Activated CD4-positive, alpha-beta memory T cell treated with anti-CD3 and anti-CD28 coated beads for 36 hours (primary cell): ENCODE measurements at regions of chr6 and their contacts with region 1.

Region 1: DNA sequence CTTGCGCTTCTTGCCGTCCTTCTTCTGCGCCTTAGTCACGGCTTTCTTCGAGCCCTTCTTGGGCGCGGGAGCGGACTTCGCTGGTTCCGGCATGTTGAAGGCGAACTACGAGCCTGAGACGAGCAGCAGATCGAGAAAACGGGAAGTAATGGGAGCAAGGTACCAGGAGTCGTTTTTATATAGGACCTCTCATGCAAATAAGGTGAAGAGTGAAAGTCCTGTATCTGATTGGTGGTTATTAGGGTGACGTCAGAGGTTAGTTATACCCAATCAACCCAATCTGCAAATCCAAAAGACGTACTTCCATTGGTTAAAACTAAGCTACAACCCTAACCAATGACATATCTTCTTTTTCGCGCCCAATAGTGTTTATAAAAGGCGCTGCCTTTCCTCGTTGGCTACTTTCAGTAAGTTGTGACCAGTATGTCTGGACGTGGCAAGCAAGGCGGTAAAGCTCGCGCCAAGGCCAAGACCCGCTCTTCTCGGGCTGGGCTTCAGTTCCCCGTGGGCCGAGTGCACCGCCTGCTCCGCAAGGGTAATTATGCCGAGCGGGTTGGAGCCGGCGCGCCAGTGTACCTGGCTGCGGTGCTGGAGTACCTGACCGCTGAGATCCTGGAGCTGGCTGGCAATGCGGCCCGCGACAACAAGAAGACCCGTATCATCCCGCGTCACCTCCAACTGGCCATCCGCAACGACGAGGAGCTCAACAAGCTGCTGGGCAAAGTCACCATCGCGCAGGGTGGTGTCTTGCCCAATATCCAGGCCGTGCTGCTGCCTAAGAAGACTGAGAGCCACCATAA is 100.6 kb upstream of the PRSS16 start:
- DNase-seq: peak; percentile 89
- H3K4me3 Mint-ChIP-seq: no peak overlapping the region
- H3K27ac Mint-ChIP-seq: no peak overlapping the region
- H3K4me1 Mint-ChIP-seq: peaks cover 21% of the 10 kb centered on the region
- H3K27me3 Mint-ChIP-seq: no peaks in the 10 kb centered on the region

Region 2: GRCh38 chr6:26196846-26197648 is 949.9 kb before region 1 on chr6:
- CTCF ChIA-PET with region 1: no interaction called
- POLR2A ChIA-PET with region 1: interaction called, 11 read pairs
- intact Hi-C with region 1: no loop called
- DNase-seq: peak; percentile 84
- H3K4me3 Mint-ChIP-seq: peak overlapping the region; percentile 86
- H3K27ac Mint-ChIP-seq: peak overlapping the region; percentile 99
- H3K4me1 Mint-ChIP-seq: peaks cover 31% of the 10 kb centered on the region
- H3K27me3 Mint-ChIP-seq: peaks cover 3% of the 10 kb centered on the region

Region 3: GRCh38 chr6:27126815-27127537 is 19.9 kb before region 1 on chr6:
- CTCF ChIA-PET with region 1: interaction called, 14 read pairs
- POLR2A ChIA-PET with region 1: interaction called, 375 read pairs
- intact Hi-C with region 1: no loop called
- DNase-seq: peak; percentile 88
- H3K4me3 Mint-ChIP-seq: peak overlapping the region; percentile 71
- H3K27ac Mint-ChIP-seq: peak overlapping the region; percentile 65
- H3K4me1 Mint-ChIP-seq: peaks cover 19% of the 10 kb centered on the region
- H3K27me3 Mint-ChIP-seq: no peaks in the 10 kb centered on the region

Region 4: DNA sequence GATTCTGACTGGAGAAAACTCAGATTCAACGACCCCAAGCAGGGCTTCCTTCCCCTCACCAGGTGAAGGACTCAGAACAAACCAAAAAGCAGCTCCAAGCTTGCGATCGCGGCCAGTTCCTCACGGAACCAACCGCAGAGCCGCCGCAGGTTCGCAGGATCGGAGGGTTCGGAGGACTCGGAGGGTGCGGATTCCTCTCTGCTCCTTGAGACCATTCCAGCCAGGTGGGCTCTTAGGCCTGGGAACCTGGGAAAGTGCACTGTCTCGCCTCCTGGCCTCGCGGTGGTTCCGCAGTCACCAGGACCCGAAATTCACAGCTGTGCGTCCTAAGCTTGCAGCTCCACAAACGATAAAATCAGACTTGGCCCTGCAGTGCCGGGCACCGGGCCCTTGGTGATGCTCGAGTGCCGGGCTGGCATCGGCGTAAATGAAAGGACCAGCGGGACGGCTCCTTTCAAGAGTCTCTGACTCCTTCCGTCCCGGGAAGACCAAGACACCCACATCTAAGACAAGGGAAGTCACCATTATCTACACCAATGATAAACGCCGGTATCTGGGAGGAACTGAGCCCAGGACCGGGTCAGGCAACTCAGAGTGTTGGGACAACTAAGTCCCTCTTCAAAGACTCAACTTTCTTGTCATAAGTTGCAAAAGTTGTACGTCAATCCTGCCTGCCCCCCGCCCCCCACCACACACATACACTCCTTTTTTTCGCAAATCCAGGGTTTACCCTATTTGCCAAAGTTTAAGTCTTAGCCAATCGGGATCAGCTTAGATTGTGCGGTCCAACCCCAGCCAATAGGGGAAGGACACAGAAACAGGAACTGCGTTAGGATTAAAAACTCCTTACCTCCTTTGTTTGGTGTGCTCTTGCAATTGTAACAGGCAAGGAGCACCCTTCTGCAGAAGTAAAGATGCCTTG is 30.8 kb after region 1 on chr6:
- CTCF ChIA-PET with region 1: no interaction called
- POLR2A ChIA-PET with region 1: interaction called, 10 read pairs
- intact Hi-C with region 1: no loop called
- DNase-seq: peak; percentile 84
- H3K4me3 Mint-ChIP-seq: peak overlapping the region; percentile 88
- H3K27ac Mint-ChIP-seq: peak overlapping the region; percentile 88
- H3K4me1 Mint-ChIP-seq: peaks cover 10% of the 10 kb centered on the region
- H3K27me3 Mint-ChIP-seq: peaks cover 1% of the 10 kb centered on the region

Region 5: DNA sequence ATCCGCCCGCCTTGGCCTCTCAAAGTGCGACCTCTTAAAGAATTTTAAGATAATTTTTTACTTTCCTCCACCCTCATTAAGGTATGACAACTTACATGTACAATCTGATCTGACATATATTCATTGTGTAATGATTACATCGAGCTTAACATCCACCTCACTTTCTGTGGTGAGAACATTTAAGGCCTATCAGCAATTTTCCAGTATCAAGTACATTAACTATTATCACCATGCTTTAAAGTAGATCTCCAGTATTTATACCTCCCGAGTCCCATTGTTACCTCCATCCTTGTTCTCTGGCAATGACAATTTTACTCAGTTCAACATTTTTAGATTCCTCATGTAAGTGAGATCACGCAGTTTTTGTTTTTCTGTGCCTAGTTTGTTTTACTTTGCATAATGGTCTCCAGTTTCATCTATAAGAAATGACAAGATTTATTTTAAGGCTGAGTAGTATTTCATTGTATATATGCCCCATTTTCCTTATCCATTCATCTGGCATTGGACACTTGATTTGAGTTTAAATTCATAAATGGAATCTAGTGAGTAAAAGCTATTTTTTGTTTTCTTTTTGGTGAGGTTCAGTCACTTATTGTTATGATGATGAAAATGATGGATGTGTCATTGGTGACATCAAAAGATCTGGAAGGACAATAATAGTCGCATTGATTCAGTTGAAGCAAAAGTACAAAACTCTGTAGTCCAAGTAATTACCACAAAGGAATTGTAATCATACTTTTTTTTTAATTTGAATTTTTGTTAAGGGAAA is 678.3 kb after region 1 on chr6:
- CTCF ChIA-PET with region 1: no interaction called
- POLR2A ChIA-PET with region 1: interaction called, 10 read pairs
- intact Hi-C with region 1: no loop called
- DNase-seq: no peak
- H3K4me3 Mint-ChIP-seq: peak overlapping the region; percentile 87
- H3K27ac Mint-ChIP-seq: peak overlapping the region; percentile 98
- H3K4me1 Mint-ChIP-seq: peaks cover 32% of the 10 kb centered on the region
- H3K27me3 Mint-ChIP-seq: no peaks in the 10 kb centered on the region

Region 6: DNA sequence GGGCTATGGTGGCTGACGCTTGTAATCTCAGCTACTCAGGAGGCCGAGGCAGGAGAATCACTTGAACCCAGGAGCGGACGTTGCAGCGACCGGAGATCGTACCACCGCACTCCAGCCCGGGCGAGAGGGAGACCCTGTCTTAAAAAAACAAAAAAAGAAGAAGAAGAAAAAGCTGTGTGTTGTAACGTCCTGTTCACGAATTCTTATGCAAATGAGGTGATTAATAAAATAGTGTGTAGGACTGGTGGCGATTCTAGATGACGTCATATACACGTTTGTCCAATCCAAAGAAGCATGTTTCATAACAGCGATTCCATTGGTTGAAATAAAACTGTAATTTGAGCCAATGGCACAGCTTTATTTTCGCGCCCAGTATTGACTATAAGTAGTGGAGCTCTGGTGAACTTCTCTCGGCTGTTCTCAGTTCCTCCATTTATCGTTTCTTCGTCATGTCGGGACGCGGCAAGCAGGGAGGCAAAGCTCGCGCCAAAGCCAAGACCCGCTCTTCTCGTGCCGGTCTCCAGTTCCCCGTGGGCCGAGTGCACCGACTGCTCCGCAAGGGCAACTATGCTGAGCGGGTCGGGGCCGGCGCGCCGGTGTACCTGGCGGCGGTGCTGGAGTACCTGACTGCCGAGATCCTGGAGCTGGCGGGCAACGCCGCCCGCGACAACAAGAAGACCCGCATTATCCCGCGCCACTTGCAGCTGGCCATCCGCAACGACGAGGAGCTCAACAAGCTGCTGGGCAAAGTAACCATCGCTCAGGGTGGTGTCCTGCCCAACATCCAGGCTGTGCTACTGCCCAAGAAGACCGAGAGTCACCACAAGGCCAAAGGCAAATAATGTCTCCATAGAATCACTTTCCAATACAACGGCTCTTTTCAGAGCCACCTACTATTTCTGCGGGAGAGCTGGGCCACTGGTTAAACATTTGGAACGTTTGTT is 718.3 kb after region 1 on chr6:
- CTCF ChIA-PET with region 1: no interaction called
- POLR2A ChIA-PET with region 1: interaction called, 48 read pairs
- intact Hi-C with region 1: no loop called
- DNase-seq: peak; percentile 85
- H3K4me3 Mint-ChIP-seq: peak overlapping the region; percentile 96
- H3K27ac Mint-ChIP-seq: peak overlapping the region; percentile 100
- H3K4me1 Mint-ChIP-seq: peaks cover 38% of the 10 kb centered on the region
- H3K27me3 Mint-ChIP-seq: peaks cover 20% of the 10 kb centered on the region

Region 7: DNA sequence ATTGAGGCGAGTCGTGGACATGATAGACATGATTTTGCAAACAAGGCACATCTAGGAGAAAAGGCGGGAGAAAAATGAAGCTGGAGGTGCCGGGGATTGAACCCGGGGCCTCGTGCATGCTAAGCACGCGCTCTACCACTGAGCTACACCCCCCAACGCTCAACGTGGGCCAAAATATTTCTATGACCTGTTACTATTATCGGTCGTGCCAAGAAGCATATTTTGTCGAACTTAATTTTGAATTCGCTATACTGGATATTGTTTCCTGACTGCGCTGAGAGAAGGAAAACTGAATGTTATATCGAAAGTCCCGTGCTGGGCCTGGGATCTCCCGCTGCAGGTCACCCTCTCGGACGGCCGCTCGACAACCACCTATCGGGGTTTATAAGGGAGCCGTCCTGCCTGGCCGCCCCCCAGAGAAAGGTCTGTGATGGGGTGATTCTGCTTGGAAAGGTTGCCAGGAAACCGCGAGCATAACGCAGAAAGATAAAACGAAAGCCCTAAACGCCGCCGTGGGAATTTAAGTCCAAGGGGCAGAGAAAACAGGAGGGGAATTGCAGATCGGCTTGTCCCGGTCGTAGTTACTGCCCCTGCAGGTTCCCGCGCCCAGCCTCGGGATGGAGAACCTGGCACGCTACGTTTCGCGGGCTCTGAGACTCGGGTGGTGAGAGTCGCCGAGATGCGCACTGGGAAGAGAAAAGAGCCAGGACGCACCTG is 1716.9 kb after region 1 on chr6:
- CTCF ChIA-PET with region 1: no interaction called
- POLR2A ChIA-PET with region 1: interaction called, 11 read pairs
- intact Hi-C with region 1: loop called (anchors 10 kb)
- DNase-seq: peak; percentile 90
- H3K4me3 Mint-ChIP-seq: peak overlapping the region; percentile 82
- H3K27ac Mint-ChIP-seq: peak overlapping the region; percentile 91
- H3K4me1 Mint-ChIP-seq: peaks cover 38% of the 10 kb centered on the region
- H3K27me3 Mint-ChIP-seq: peaks cover 5% of the 10 kb centered on the region